Left cardiac atrium (tissue), 4 donors: ENCODE measurements at regions of chr3 and their contacts with region 1.

Region 1: DNA sequence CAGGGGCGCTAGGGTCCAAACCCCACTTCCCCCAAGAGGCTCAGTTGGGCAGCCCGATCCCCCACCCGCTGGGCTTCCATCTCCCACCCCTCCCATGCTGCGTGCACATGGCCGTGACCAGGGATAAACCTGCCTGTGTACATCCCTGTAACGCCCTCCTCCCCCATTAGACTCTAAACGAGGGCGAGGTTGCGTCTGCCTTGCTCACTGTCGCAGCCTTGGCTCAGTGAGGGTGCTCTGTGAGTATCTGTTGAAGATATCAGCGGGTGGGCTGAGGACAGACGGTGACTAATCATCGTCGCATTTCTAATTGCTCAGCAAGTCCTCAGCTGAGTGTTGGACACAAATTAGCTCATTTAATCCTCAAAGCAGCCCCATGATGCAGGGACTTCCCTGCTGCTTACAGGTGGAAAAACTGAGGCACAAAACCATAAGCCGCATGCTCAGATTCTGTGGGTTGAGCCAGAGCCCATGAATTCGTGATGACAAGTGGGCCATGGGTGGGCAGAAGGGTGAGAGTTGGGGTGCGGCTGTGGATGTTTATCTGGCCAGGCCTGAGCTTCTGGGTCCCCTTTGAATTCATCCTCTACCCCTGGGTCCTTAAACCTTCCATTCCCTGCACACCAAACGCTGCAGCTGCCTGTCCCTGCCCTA is 26.0 kb downstream of the FBLN2 start:
- DNase-seq: no peak
- ATAC-seq: peak; percentile 16 to 75

Region 2: GRCh38 chr3:13612829-13613228 is 37.9 kb after region 1 on chr3:
- intact Hi-C with region 1: loop called in 1 of 2 experiments (anchors 5 kb)
- DNase-seq: no peak
- ATAC-seq: peak; percentile 23 to 93